GM12878 (cell line): ENCODE measurements at regions of chr19 and their contacts with region 1.

Region 1: DNA sequence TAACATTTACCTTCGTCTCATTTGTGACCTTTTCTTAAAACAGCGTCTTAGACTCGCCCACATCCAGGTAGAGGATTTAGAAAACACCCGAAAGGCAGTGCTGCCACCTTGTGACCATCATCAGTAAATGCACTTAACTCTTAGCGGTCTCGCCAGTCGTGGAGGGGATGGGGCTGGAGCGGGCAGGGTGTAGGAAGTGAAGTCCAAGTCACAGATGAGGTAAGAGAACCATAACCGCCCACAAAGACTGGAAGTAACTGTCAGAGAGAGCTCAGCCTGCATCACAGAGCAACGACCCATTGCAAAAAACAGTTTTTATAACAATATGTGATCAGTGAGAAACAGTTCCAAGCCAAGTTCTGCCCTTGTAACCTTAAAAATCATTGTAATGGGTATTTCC is 10.7 kb upstream of the CEACAM3 start:
- DNase-seq: peak; percentile 35
- ATAC-seq: peak; percentile 93
- H3K4me3 ChIP-seq: no peak overlapping the region
- H3K27ac ChIP-seq: no peak overlapping the region
- H3K4me1 ChIP-seq: peaks cover 5% of the 10 kb centered on the region
- H3K27me3 ChIP-seq: no peaks in the 10 kb centered on the region; a peak in 2 of 4 replicates
- CTCF ChIP-seq: peak; percentile 72 to 87 (median 87)
- EP300 ChIP-seq: no peak
- POLR2A ChIP-seq: no peak
- RAD21 ChIP-seq: peak; percentile 72

Region 2: DNA sequence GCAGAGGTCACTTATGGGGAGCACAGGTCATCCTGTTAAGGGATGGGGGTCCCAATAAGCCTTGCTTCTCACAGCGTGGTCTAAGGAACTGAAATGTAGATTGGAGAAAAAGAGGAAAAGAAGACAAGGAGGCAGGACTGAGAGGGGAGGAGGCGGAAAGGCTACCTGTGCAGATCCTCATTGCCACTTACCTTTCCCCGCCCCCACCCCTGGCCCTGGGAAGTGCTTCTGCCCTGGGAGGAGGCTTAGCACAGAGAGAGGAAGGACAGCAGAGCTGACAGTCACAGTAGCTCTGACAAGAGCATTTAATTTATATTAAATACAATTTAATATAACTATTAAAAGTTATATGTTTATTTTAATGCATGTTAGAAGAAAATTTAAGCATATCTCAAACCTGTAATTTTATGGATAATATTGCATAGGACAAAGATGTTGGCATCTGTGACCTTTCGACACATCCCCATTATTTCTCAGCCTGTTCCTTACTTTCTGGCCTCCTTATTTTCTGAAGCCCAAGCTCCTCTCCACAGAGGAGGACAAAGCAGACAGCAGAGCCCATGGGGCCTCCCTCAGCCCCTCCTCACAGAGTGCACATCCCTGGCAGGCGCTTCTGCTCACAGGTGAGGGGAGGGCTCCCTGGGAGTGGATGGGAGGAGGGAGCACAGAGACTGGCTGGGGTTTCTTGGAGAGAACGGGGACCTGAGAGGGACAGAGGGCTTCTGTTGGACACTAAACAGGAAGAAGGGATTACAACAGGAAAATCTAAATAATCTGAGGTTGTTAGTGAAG is 186.3 kb before region 1 on chr19:
- CTCF ChIA-PET with region 1: no interaction called
- POLR2A ChIA-PET with region 1: no interaction called
- RAD21 ChIA-PET with region 1: no interaction called
- SMC1A ChIA-PET with region 1: no interaction called
- in situ Hi-C with region 1: no loop called
- intact Hi-C with region 1: no loop called
- DNase-seq: no peak
- ATAC-seq: no peak
- H3K4me3 ChIP-seq: no peak overlapping the region
- H3K27ac ChIP-seq: no peak overlapping the region
- H3K4me1 ChIP-seq: no peaks in the 10 kb centered on the region
- H3K27me3 ChIP-seq: peaks cover under 1 to 3% of the 10 kb centered on the region in 2 experiments; a peak in 3 of 4 replicates
- CTCF ChIP-seq: no peak
- EP300 ChIP-seq: no peak
- POLR2A ChIP-seq: no peak
- RAD21 ChIP-seq: no peak

Region 3: DNA sequence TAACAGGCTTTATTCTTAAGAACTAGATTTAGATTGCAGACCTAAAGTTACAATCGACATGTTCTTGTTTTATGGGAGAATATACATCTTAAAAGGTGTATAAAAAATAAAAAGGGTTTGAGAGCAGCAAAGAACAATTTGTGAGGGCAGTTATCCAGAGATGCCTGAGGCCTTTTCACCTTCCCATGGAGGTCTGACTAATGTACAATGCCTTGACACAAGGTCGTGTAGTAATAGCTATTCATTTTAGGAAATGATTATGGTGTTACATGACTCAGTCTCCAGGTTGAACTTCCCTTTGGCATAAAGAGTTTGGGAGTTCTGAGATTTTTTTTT is 10.3 kb before region 1 on chr19:
- CTCF ChIA-PET with region 1: interaction called, 19 read pairs
- POLR2A ChIA-PET with region 1: interaction called, 3 read pairs
- RAD21 ChIA-PET with region 1: no interaction called
- SMC1A ChIA-PET with region 1: no interaction called
- in situ Hi-C with region 1: no loop called
- intact Hi-C with region 1: no loop called
- DNase-seq: no peak
- ATAC-seq: no peak
- H3K4me3 ChIP-seq: no peak overlapping the region
- H3K27ac ChIP-seq: no peak overlapping the region
- H3K4me1 ChIP-seq: no peaks in the 10 kb centered on the region
- H3K27me3 ChIP-seq: no peaks in the 10 kb centered on the region; a peak in 3 of 4 replicates
- CTCF ChIP-seq: no peak
- EP300 ChIP-seq: no peak
- POLR2A ChIP-seq: no peak
- RAD21 ChIP-seq: no peak

Region 4: DNA sequence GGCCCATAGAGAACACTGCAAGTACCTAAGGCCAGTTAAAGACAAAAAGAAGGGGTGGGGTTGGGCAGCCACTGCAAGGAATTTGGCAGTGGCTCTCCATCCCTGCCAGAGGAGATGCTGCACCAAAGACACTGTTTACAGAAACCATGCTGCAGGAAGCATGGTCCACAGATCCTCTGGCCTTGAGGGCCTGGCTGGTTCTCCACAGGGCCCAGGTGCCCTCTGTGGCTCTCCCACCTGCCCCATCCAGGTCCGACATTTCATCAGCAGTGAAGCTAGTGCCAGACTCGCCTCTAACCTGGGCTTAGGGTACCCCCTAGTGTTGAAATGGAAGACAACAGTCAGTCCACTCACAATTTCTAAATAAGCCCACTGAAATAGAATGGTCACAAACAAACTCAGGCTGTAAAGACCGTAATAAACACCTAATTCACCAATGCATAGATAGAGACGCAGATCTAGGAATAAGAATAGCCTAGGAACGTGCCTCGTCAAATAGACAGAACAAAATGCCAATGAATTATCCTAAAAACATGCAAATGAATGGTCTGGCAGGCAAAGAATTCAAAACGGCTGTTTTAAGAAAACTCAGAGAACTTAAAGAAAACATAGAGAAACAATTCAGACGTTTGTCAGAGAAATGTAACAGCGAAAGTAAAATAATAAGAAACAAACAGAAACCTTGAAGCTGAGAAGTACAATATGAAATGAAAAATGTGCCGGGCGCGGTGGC is 35.5 kb after region 1 on chr19:
- CTCF ChIA-PET with region 1: interaction called, 188 read pairs
- POLR2A ChIA-PET with region 1: no interaction called
- RAD21 ChIA-PET with region 1: interaction called, 4 read pairs
- SMC1A ChIA-PET with region 1: interaction called, 4 read pairs
- in situ Hi-C with region 1: no loop called
- intact Hi-C with region 1: no loop called
- DNase-seq: peak; percentile 12
- ATAC-seq: peak; percentile 93
- H3K4me3 ChIP-seq: no peak overlapping the region
- H3K27ac ChIP-seq: no peak overlapping the region
- H3K4me1 ChIP-seq: no peaks in the 10 kb centered on the region
- H3K27me3 ChIP-seq: no peaks in the 10 kb centered on the region
- CTCF ChIP-seq: peak; percentile 69 to 78 (median 72)
- EP300 ChIP-seq: no peak
- POLR2A ChIP-seq: no peak
- RAD21 ChIP-seq: peak; percentile 94

Region 5: GRCh38 chr19:41872775-41873647 is 87.4 kb after region 1 on chr19:
- CTCF ChIA-PET with region 1: no interaction called
- POLR2A ChIA-PET with region 1: no interaction called
- RAD21 ChIA-PET with region 1: no interaction called
- SMC1A ChIA-PET with region 1: no interaction called
- in situ Hi-C with region 1: no loop called
- intact Hi-C with region 1: no loop called
- DNase-seq: no peak
- ATAC-seq: peak; percentile 11; the same call in 2 of the 3 replicates
- H3K4me3 ChIP-seq: no peak overlapping the region
- H3K27ac ChIP-seq: peak overlapping the region; percentile 72
- H3K4me1 ChIP-seq: peaks cover 77% of the 10 kb centered on the region
- H3K27me3 ChIP-seq: no peaks in the 10 kb centered on the region
- CTCF ChIP-seq: peak; percentile 85 to 90 (median 88)
- EP300 ChIP-seq: no peak
- POLR2A ChIP-seq: peak; percentile 71
- RAD21 ChIP-seq: peak; percentile 87